ENCODE measurements at regions of chr5 and their contacts with region 1.

Region 1: GRCh38 chr5:94849821-94850736 is 231.6 kb downstream of the SLF1 start:
- DNase-seq: peak; percentile 40
- H3K4me3 Mint-ChIP-seq: no peak overlapping the region
- H3K27ac Mint-ChIP-seq: no peak overlapping the region
- H3K4me1 Mint-ChIP-seq: peaks cover 3% of the 10 kb centered on the region
- H3K27me3 Mint-ChIP-seq: peaks cover 6% of the 10 kb centered on the region

Region 2: DNA sequence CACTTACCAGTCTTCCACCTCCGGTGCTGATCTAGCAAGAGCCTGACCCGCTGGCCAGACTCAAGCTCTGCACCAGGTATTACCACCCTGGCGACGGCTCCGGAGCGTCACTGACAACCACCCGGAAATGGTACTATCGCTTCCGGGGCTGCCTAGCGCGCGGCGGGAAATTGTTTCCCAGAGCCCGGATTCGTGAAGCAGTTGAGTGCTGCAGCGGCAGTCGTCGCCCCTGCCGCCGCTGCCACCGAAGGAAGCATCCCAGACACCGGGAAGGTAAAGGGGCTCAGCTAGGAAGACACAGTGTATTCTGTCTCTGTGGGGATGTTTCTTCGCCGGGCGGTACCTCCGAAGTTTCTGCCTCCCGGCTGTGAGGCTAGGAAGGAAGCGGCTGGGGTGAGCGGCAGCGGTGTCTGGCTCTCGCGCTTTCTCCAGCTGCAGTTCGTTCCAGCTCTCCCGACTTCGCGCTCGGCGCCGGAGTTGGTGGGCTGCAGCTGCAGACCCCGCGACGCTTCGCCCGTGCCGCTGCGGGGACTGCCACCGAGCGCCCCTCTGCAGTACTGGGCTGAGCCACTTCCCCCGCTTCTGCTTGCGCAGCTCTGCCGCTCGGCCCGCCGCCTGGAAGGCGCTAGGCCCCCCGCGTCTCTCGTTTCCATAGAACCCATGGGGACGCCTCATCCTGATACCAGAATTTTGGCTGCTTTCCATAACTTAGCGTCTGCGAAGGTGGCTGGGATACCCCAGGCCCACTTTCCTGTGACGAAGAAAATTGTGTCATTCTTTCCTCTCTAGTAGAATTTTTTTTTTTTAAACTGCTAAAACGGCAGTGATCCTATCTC is 231.4 kb before region 1 on chr5 and contains the starts of genes KIAA0825 and SLF1:
- CTCF ChIA-PET with region 1: no interaction called
- intact Hi-C with region 1: loop called (anchors 2 kb)
- DNase-seq: peak; percentile 93
- H3K4me3 Mint-ChIP-seq: peak within 1 kb of the TSS; percentile 96
- H3K27ac Mint-ChIP-seq: peak within 1 kb of the TSS; percentile 93
- H3K4me1 Mint-ChIP-seq: peaks cover 34% of the 10 kb centered on the region
- H3K27me3 Mint-ChIP-seq: no peaks in the 10 kb centered on the region
- total RNA-seq, gene KIAA0825: 0.07 to 0.24 TPM
- total RNA-seq, gene SLF1: 12.4 to 12.8 TPM